Mucosa of descending colon (tissue), 3 donors: ENCODE measurements at regions of chr9 and their contacts with region 1.

Region 1: DNA sequence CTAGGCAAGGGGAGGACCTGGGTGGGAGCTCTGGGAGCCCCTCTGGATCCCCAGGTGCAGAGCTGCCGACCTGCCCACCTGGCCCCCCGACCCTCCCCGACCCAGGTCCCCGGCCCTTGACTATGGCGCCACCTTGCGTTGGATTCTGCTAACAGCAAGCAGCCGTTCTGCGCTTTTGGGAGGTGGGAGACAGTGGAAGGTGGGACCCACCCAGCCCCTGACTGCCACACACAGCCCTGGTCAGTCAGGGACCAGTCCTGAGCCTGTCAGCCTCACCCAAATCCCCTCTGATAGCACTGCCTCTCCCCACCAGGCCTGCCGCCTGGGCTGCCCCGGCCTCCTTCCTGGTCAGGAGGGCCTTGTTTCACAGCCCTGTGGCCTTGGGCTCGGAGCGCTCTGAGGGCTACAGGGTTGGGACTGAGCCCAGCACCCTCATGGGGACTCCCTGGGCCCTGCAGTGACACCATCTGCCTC is 77.9 kb downstream of the HMCN2 start:
- DNase-seq: peak; percentile 42 to 52 (median 46)
- ATAC-seq: peak; percentile 27
- H3K4me3 ChIP-seq: no peak overlapping the region
- H3K4me1 ChIP-seq: no peaks in the 10 kb centered on the region
- CTCF ChIP-seq: peak; percentile 47

Region 2: GRCh38 chr9:130263601-130264413 is 79.7 kb before region 1 on chr9:
- intact Hi-C with region 1: loop called in 1 of 2 experiments (anchors 5 kb)
- DNase-seq: no peak
- ATAC-seq: peak; percentile 24
- H3K4me3 ChIP-seq: no peak overlapping the region
- H3K4me1 ChIP-seq: peaks cover 6% of the 10 kb centered on the region
- CTCF ChIP-seq: no peak

Region 3: DNA sequence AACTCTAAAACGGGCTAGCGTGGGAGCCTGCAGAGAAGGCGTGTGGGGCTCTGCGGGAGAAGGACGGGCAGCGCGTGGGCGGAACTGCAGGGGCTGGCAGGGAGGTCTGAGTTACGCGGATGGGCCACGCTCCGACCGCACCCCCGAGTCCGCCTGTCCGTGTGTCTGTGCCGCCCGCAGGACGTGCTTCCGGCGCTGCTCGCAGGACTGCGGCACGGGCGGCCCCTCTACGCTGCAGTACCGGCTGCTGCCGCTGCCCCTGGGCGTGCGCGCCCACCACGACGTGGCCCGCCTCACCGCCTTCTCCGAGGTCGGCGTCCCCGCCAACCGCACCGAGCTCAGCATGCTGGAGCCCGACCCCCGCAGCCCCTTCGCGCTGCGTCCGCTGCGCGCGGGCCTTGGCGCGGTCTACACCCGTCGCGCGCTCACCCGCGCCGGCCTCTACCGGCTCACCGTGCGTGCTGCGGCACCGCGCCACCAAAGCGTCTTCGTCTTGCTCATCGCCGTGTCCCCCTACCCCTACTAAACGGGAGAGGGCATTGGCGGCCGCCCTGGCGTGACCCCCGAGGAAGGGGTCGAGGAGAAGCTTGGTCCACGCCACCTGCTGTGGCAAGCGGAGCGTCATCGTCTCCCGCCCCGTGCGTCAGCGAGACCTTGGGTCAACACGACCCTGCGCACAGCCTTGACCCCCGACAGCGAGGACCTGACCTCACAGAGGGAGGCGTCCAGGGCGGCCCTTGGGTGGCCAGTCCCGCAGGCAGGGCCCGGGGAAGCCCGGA is 89.9 kb after region 1 on chr9:
- intact Hi-C with region 1: no loop called
- DNase-seq: peak in 2 of 3 donors; percentile 58 to 64
- ATAC-seq: peak; percentile 87
- H3K4me3 ChIP-seq: no peak overlapping the region
- H3K4me1 ChIP-seq: peaks cover 11% of the 10 kb centered on the region
- CTCF ChIP-seq: peak; percentile 53